ENCODE measurements at regions of chr9 and their contacts with region 1.

Region 1: DNA sequence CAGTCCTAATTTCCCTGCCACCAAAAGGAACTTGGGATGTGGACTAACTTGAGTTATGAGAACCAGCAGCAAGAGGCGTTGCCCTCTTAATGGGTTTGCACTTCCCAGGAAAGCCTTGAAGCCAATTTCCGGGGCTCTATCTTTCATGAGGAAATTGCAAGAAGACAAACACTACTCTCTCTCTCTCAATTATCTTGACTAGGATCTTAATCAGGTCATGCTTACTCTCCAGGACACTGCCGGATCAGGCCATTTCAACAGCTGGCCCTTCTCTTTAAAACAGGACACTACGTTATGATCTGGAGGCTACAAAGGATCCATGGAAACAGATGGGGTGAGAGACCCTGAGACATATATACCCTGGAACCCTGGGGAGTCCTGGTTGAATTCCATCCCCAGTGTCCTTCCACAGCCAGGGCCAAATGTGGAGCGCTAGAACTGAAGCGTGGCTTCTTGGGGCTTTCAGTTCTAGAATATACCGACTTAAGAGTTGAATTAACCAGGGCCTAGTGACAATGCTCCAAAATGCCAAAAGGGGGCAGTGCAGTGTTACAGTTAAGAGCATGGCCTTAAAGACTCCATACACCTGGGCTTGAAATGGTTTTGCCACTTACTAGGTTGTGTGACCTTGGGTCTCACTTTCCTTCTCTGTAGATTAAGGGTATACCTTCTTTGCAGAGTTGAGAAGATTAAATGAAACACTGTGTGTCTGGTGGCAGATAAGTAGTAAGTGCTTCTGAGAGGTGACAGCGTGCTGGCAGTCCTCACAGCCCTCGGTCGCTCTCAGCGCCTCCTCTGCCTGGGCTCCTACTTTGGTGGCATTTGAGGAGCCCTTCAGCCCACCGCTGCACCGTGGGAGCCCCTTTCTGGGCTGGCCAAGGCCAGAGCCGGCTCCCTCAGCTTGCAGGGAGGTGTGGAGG is 21.1 kb downstream of the FAM219A start:
- DNase-seq: peak in 1 of 2 donors; percentile 57
- ATAC-seq: peak; percentile 75 to 86 (median 80)
- H3K4me3 ChIP-seq: no peak overlapping the region
- H3K27ac ChIP-seq: no peak overlapping the region
- H3K4me1 ChIP-seq: peaks cover 5 to 50% (median 32%) of the 10 kb centered on the region in 9 donors
- H3K27me3 ChIP-seq: no peaks in the 10 kb centered on the region
- CTCF ChIP-seq: peak; percentile 53 to 86 (median 78)

Region 2: GRCh38 chr9:34376596-34377403 is 60.5 kb before region 1 on chr9 and contains the start of gene MYORG:
- intact Hi-C with region 1: loop called in 1 of 10 experiments (anchors 10 kb)
- DNase-seq: peak; percentile 92 to 94
- ATAC-seq: peak; percentile 77 to 89 (median 84)
- H3K4me3 ChIP-seq: peak within 1 kb of the TSS; percentile 55 to 92 (median 80)
- H3K27ac ChIP-seq: peak within 1 kb of the TSS; percentile 35 to 88 (median 75)
- H3K4me1 ChIP-seq: peaks cover 6 to 53% (median 39%) of the 10 kb centered on the region in 9 donors
- H3K27me3 ChIP-seq: peaks cover 0 to 7% (median 0%) of the 10 kb centered on the region in 7 donors
- CTCF ChIP-seq: no peak
- total RNA-seq, gene MYORG: 4.9 to 9.1 (median 7.1) TPM

Region 3: DNA sequence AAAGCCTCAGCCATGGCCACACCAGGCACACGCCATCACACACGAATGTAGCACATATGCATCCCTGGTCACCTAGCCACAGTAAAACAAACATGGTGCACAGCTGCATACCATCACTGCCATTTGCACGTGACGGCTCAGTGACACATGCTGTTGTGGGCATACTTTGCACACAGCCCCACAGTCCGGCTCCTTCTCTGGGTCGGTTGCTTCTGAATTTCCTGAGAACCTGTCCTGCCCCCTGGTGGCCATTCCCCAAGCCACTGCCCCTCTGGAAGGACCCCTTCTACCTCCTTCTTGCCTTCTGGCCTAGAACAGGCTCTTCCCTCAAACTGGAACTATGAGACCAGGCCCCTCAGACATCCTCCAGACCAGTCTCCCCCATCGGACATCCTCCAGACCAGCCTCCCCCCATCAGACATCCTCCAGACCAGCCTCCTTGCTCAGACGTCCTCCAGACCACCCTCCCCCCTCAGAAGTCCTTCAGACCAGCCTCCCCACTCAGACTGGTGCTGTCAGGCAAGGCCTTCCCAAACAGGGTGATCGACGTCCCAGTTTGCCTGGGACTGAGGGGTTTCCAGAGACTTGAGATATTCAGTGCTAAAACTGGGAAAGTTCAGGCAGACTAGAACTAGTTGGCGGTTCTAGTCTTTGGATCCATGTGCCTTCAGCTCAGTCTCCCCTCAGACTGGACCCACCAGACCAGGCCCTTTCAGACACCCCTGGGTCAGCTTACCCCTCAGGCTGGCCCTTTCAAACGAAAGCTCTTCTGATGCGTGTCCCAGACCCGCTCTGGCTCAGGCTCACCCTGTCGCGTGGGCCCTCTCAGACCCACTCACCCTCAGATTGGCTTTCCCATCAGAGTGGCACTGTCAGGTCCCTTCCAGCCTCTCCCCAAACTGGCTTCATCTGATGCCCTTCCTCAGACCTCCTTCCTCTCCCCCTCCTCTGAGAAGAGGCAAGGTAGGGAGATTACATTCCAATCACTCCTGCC is 109.9 kb after region 1 on chr9:
- intact Hi-C with region 1: loop called in 3 of 10 experiments (anchors 2 to 5 kb)
- DNase-seq: peak; percentile 56 to 64
- ATAC-seq: peak; percentile 44 to 78 (median 68)
- H3K4me3 ChIP-seq: no peak overlapping the region
- H3K27ac ChIP-seq: no peak overlapping the region
- H3K4me1 ChIP-seq: peaks cover 0 to 6% (median 0%) of the 10 kb centered on the region in 9 donors
- H3K27me3 ChIP-seq: peaks cover 0 to 9% (median 3%) of the 10 kb centered on the region in 7 donors
- CTCF ChIP-seq: peak; percentile 44 to 72 (median 67)

Region 4: GRCh38 chr9:34591248-34591916 is 154.1 kb after region 1 on chr9:
- intact Hi-C with region 1: loop called in 6 of 10 experiments (anchors 5 to 10 kb)
- DNase-seq: peak; percentile 85 to 90
- ATAC-seq: peak; percentile 81 to 96 (median 89)
- H3K4me3 ChIP-seq: peak overlapping the region in 9 of 10 donors; percentile 32 to 57 (median 51)
- H3K27ac ChIP-seq: peak overlapping the region in 6 of 10 donors; percentile 12 to 54 (median 32)
- H3K4me1 ChIP-seq: peaks cover 16 to 53% (median 38%) of the 10 kb centered on the region in 9 donors
- H3K27me3 ChIP-seq: peaks cover 0 to 86% (median 56%) of the 10 kb centered on the region in 7 donors
- CTCF ChIP-seq: peak; percentile 82 to 95 (median 92)